ENCODE measurements at regions of chr16 and their contacts with region 1.

Region 1: DNA sequence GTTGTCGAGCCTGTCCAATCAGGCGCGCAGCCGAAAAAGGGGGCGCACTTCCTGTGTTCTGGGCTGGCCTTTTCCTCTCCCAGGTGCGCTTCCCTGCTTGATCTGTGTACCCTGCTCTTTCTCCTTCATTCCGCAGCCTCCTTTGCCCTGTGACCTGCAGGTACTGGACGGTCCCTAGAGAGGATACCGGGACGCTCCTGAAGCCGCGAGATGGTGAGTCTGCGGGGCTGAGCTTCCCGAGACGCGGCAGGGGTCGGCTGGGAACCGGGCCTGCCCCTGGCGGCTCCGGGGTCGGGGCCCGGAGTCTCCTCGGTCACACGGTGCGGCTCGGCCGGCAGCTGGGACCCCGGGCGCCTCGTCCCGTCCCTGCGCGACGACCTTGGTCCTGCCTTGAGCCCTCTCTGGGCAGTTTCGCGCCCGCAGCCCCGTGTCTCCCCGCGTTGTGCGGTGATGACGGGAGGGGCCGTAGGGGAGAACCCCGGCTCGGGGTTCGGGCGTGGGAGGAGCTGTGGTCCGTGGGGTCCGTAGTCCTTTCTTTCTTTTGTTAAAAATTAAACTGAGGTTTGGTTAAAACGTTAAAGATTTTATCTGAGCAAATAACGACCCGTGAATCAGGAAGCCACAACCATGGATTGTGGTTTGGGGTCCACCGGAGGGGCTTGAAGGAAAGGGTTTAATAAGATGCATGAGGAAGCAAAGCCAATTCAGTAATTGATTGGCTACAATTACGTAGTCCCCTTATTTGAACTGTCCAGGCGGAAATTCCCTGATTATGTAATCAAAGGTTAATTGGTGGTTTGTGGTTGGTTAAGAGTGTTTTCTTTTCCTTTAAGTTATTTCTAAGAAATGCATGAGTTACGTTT is 172.8 kb upstream of the ZNF267 start:
- DNase-seq: peak; percentile 90
- ATAC-seq: peak; percentile 29
- H3K4me3 ChIP-seq: peak overlapping the region; percentile 53 to 95 (median 80)
- H3K4me3 Mint-ChIP-seq: peak overlapping the region; percentile 92
- H3K27ac ChIP-seq: peak overlapping the region; percentile 62 to 90
- H3K27ac Mint-ChIP-seq: peak overlapping the region; percentile 87
- H3K4me1 ChIP-seq: peaks cover 12 to 23% of the 10 kb centered on the region in 2 donors
- H3K4me1 Mint-ChIP-seq: peaks cover 26% of the 10 kb centered on the region
- H3K27me3 ChIP-seq: no peaks in the 10 kb centered on the region
- H3K27me3 Mint-ChIP-seq: no peaks in the 10 kb centered on the region
- CTCF ChIP-seq: no peak

Region 2: DNA sequence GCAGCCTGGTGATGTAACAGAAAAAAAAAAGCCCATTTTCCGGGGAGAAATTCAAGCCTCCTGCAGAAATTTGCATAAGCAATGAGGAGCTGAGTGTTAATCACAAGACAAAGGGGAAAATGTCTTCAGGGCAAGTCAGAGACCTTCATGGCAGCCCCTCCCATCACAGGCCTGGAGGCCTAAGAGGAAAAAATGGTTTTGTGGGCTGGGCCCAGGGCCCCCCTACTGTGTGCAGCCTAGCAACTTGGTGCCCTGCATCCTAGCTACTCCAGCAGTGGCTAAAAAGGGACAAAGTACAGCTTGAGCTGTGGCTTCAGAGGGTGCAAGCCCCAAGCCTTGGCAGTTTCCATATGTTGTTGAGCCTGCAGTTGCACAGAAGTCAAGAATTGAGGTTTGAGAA is 123.3 kb before region 1 on chr16:
- CTCF ChIA-PET with region 1: no interaction called
- POLR2A ChIA-PET with region 1: no interaction called
- intact Hi-C with region 1: no loop called
- DNase-seq: no peak
- ATAC-seq: no peak
- H3K4me3 ChIP-seq: no peak overlapping the region
- H3K4me3 Mint-ChIP-seq: no peak overlapping the region
- H3K27ac ChIP-seq: no peak overlapping the region
- H3K27ac Mint-ChIP-seq: no peak overlapping the region
- H3K4me1 ChIP-seq: no peaks in the 10 kb centered on the region
- H3K4me1 Mint-ChIP-seq: no peaks in the 10 kb centered on the region
- H3K27me3 ChIP-seq: peaks cover 0 to under 1% (median 0%) of the 10 kb centered on the region in 4 experiments
- H3K27me3 Mint-ChIP-seq: peaks cover 11% of the 10 kb centered on the region
- CTCF ChIP-seq: no peak

Region 3: DNA sequence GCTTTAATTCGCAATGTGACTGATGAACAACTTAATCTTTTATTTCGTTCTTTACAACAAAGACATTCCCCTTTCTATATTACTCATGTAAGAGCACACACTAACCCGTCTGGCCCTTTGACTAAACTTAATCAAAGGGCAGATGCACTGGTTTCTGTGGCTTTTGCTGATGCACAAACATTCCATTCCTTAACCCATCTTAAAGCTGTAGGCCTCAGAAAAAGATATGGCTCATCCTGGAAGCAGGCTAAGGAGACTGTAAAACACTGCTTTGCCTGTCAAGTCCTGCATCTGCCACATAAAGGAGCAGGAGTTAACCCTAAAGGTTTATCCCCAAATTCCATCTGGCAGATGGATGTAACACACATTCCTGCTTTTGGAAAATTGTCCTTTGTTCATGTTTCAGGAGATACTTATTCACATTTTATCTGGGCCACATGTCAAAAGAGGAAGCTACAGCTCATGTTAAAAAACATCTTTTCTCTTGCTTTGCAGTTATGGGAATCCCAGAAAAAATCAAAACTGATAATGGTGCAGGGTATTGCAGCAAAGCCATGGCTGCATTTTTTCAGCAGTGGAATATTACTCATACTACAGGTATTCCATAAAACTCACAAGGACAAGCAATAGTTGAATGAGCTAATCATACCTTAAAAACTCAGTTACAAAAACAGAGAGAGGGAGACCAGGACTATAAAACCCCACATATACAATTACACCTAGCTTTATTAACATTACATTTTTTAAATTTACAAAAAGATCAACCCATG is 35.9 kb before region 1 on chr16:
- CTCF ChIA-PET with region 1: no interaction called
- POLR2A ChIA-PET with region 1: no interaction called
- intact Hi-C with region 1: no loop called
- DNase-seq: no peak
- ATAC-seq: no peak
- H3K4me3 ChIP-seq: no peak overlapping the region
- H3K4me3 Mint-ChIP-seq: no peak overlapping the region
- H3K27ac ChIP-seq: no peak overlapping the region
- H3K27ac Mint-ChIP-seq: no peak overlapping the region
- H3K4me1 ChIP-seq: no peaks in the 10 kb centered on the region
- H3K4me1 Mint-ChIP-seq: no peaks in the 10 kb centered on the region
- H3K27me3 ChIP-seq: peaks cover 0 to 3% (median 0%) of the 10 kb centered on the region in 4 experiments
- H3K27me3 Mint-ChIP-seq: peaks cover 18% of the 10 kb centered on the region
- CTCF ChIP-seq: no peak

Region 4: GRCh38 chr16:31713071-31713944 is 12.6 kb after region 1 on chr16:
- CTCF ChIA-PET with region 1: interaction called, 38 read pairs
- POLR2A ChIA-PET with region 1: interaction called, 4 read pairs
- intact Hi-C with region 1: loop called (anchors 1 kb)
- DNase-seq: peak; percentile 93
- ATAC-seq: peak; percentile 96
- H3K4me3 ChIP-seq: peak overlapping the region; percentile 85 to 98 (median 89)
- H3K4me3 Mint-ChIP-seq: peak overlapping the region; percentile 98
- H3K27ac ChIP-seq: peak overlapping the region; percentile 89 to 93
- H3K27ac Mint-ChIP-seq: peak overlapping the region; percentile 98
- H3K4me1 ChIP-seq: peaks cover 30 to 31% of the 10 kb centered on the region in 2 donors
- H3K4me1 Mint-ChIP-seq: peaks cover 44% of the 10 kb centered on the region
- H3K27me3 ChIP-seq: no peaks in the 10 kb centered on the region
- H3K27me3 Mint-ChIP-seq: no peaks in the 10 kb centered on the region
- CTCF ChIP-seq: peak; percentile 15

Region 5: GRCh38 chr16:31734265-31734664 is 33.5 kb after region 1 on chr16:
- CTCF ChIA-PET with region 1: no interaction called
- POLR2A ChIA-PET with region 1: no interaction called
- intact Hi-C with region 1: no loop called
- DNase-seq: no peak
- ATAC-seq: no peak
- H3K4me3 ChIP-seq: no peak overlapping the region
- H3K4me3 Mint-ChIP-seq: no peak overlapping the region
- H3K27ac ChIP-seq: no peak overlapping the region
- H3K27ac Mint-ChIP-seq: no peak overlapping the region
- H3K4me1 ChIP-seq: no peaks in the 10 kb centered on the region
- H3K4me1 Mint-ChIP-seq: no peaks in the 10 kb centered on the region
- H3K27me3 ChIP-seq: no peaks in the 10 kb centered on the region
- H3K27me3 Mint-ChIP-seq: no peaks in the 10 kb centered on the region
- CTCF ChIP-seq: no peak

Measured in B cell (primary cell).